GM18951 (cell line): ENCODE measurements at regions of chr21 and their contacts with region 1.

Region 1: DNA sequence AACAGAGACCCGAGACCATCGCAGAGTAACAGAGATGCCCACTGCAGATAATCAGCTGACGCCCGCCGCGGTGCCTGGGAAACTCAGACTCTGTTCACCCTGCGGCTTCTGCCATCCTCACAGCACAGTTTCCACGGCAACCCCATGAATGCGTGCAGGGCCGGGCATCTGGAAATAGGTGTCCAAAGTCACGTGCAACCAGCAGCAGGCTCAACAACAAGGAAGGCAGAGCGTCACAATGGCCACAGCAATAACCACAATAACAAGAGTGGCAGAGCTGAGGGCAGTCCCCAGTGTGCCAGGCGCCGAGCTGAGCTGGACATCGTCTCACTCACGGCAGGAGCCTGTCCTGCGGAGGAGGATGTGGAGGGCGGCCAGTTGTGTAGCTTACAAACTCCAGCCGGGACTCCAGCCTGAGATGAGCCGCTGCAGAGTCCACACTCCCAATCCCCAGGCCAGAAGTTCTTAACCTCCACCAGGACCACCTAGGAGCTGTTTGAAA is 102.0 kb downstream of the CRYAA start:
- POLR2A ChIP-seq: no peak

Region 2: DNA sequence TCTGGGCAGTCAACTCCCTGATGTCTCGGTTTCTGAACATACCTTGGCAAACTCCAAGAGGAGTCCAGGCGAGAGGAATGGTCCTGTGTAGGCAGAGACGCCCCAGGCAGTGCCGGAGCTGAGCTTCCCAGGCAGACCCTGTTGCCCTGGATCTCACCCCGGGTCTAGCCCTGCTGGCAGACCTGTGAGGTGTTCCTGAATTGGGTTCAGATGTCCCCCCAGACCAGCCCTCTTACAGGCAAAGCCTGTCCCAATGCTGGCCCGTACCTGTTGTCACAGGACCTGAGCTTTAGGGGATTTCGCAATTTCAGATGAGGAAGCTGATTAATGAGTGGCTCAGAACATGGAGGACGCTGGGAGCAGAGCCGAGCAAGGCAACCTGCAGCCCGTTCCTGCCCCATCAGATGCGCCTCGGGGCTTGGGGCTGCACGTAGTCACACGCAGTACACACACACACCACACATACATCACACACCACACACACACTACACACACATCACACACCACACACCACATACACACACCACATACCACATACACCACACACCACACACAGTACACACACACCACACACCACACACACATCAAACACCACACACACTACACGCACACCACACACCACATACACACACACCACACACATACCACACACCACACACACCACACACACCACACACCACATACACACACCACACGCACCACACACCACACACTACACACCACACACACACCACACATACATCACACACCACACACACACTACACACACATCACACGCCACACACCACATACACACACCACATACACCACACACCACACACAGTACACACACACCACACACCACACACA is 655.8 kb before region 1 on chr21:
- in situ Hi-C with region 1: no loop called
- POLR2A ChIP-seq: no peak

Region 3: GRCh38 chr21:43209575-43210445 is 61.0 kb before region 1 on chr21:
- in situ Hi-C with region 1: loop called (anchors 5 kb)
- POLR2A ChIP-seq: no peak